Esophagus muscularis mucosa (tissue), 4 donors: ENCODE measurements at regions of chr17 and their contacts with region 1.

Region 1: GRCh38 chr17:75749545-75750389 is 15.2 kb downstream of the GALK1 start:
- DNase-seq: peak; percentile 97
- H3K4me3 ChIP-seq: peak overlapping the region in 3 of 4 donors; percentile 1 to 35 (median 21)
- H3K27ac ChIP-seq: peak overlapping the region in 1 of 4 donors; percentile 28
- H3K4me1 ChIP-seq: peaks cover 18 to 46% (median 40%) of the 10 kb centered on the region in 4 donors
- H3K27me3 ChIP-seq: no peaks in the 10 kb centered on the region
- CTCF ChIP-seq: peak; percentile 88 to 95 (median 91)
- EP300 ChIP-seq: no peak
- POLR2A ChIP-seq: no peak

Region 2: GRCh38 chr17:75515496-75516254 is 234.1 kb before region 1 on chr17 and contains the start of gene CASKIN2:
- intact Hi-C with region 1: no loop called
- DNase-seq: peak; percentile 97
- H3K4me3 ChIP-seq: peak within 1 kb of the TSS; percentile 92 to 98 (median 96)
- H3K27ac ChIP-seq: peak within 1 kb of the TSS; percentile 93 to 96 (median 94)
- H3K4me1 ChIP-seq: peaks cover 48 to 70% (median 60%) of the 10 kb centered on the region in 4 donors
- H3K27me3 ChIP-seq: no peaks in the 10 kb centered on the region
- CTCF ChIP-seq: peak; percentile 96 to 97 (median 97)
- EP300 ChIP-seq: no peak
- POLR2A ChIP-seq: no peak
- total RNA-seq, gene CASKIN2: 16.2 to 43.5 (median 35.5) TPM

Region 3: DNA sequence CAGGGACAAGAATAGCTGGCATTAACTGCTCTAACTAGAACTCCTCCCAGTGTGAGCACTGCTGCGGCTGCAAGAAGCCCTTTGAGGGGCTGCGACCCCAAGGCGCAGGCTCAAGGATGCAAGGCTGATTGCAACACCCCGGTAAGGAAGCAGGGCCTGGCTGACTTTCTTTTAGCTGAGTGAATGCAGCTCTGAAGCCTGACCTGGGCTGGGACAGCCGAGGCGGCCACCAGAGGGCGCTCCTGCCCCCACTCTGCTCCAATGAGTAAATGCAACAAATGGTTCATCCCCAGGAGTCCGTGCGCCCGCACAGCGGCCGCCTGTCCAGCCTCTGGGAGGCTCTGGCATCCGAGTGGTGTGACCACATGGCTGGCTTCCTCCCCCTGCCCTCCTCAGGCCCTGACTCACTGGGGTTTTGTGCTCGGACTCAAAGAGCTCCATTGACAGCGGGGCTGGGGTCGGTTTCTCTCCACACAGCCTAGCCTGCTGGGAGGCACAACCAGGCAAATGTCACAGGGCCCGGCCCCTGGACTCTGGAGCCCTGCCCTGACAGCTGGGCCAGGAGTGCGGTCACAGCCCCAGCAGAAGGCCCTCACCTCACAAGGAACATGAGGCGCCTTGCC is 116.8 kb before region 1 on chr17 and contains the start of gene SMIM5:
- intact Hi-C with region 1: loop called (anchors 1 kb)
- DNase-seq: peak; percentile 97
- H3K4me3 ChIP-seq: peak within 1 kb of the TSS; percentile 35 to 48 (median 40)
- H3K27ac ChIP-seq: peak within 1 kb of the TSS; percentile 74 to 86 (median 86)
- H3K4me1 ChIP-seq: peaks cover 24 to 31% (median 30%) of the 10 kb centered on the region in 4 donors
- H3K27me3 ChIP-seq: no peaks in the 10 kb centered on the region
- CTCF ChIP-seq: peak in 2 of 3 experiments; percentile 95 to 96
- EP300 ChIP-seq: no peak
- POLR2A ChIP-seq: peak; percentile 2
- total RNA-seq, gene SMIM5: 4.3 to 6.6 (median 5.6) TPM

Region 4: DNA sequence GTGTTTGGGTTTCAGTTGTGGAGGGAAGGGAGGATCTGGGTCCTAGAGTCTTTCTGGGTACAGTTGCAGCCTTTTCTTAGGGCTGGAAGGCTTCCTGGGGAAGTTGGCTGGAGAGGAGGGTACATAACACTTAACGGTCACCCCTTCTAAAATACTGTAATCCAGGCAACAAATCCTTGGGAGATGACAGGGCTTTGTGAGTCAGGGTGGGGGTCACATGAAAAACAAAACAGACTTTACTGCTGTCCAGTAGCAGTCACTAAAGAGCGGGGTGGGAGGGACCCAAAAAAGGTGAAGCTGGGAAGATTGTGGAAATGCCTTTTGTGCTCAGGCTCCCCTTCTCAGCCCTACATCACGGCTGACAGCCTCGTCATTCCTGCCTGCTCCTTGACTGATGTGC is 76.3 kb before region 1 on chr17:
- intact Hi-C with region 1: loop called (anchors 2 kb)
- DNase-seq: no peak
- H3K4me3 ChIP-seq: no peak overlapping the region
- H3K27ac ChIP-seq: no peak overlapping the region
- H3K4me1 ChIP-seq: peaks cover 7 to 42% (median 26%) of the 10 kb centered on the region in 4 donors
- H3K27me3 ChIP-seq: no peaks in the 10 kb centered on the region
- CTCF ChIP-seq: no peak
- EP300 ChIP-seq: no peak
- POLR2A ChIP-seq: no peak

Region 5: DNA sequence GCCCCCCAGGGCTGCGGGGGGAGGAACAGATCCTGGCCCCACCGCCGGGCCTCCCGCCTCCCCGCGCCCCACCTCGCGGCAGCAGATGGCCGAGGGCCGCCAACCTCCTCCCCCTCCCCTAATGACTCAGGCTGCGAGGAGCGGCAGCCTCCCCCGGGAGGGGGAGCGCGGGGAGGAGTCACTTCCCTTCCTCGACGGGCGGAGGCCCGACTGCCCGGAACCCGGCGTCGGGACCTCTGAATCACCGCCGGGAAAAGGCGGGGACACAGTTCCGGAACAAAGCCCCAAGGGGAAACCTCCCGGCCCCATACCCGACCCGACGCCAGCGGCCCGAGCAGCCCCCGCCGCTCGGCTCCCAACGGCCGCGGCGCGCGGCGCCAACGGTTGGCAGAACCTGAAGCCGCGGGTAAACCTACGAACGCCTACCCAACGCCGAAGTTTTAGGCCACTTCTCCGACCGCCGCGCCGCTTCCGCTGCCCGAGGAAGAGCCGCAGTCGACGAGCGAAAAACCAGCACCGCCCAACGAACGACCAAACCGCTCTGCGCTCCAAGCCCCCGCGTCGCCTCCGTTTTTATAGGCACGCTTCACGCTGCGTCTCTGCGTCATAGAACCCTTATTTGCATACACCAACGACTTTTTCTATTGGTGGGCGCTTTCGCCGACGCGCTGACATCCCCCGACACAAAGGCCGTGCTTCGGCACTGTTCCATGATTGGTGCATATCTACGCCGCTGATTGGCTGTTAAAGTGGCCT is 29.6 kb after region 1 on chr17:
- intact Hi-C with region 1: no loop called
- DNase-seq: peak; percentile 100
- H3K4me3 ChIP-seq: peak overlapping the region; percentile 80 to 97 (median 94)
- H3K27ac ChIP-seq: peak overlapping the region; percentile 98 to 100 (median 100)
- H3K4me1 ChIP-seq: peaks cover 32 to 59% (median 52%) of the 10 kb centered on the region in 4 donors
- H3K27me3 ChIP-seq: no peaks in the 10 kb centered on the region
- CTCF ChIP-seq: no peak
- EP300 ChIP-seq: peak; percentile 91
- POLR2A ChIP-seq: peak; percentile 100